IMR-90 (cell line): ENCODE measurements at regions of chr1 and their contacts with region 1.

Region 1: GRCh38 chr1:28369371-28370238 is at the start of gene PHACTR4:
- DNase-seq: peak; percentile 91
- ATAC-seq: peak; percentile 95
- H3K4me3 ChIP-seq: peak within 1 kb of the TSS; percentile 66
- H3K27ac ChIP-seq: peak within 1 kb of the TSS; percentile 93
- H3K4me1 ChIP-seq: 0 out of 2 replicates have a peak, but pooled peaks cover 5% of the 10 kb centered on the region
- H3K27me3 ChIP-seq: no peaks in the 10 kb centered on the region
- CTCF ChIP-seq: no peak
- POLR2A ChIP-seq: peak; percentile 76; the same call in 1 of the 2 replicates
- RAD21 ChIP-seq: no peak
- total RNA-seq, gene PHACTR4: 6.9 and 7.5 TPM in 2 replicates

Region 2: DNA sequence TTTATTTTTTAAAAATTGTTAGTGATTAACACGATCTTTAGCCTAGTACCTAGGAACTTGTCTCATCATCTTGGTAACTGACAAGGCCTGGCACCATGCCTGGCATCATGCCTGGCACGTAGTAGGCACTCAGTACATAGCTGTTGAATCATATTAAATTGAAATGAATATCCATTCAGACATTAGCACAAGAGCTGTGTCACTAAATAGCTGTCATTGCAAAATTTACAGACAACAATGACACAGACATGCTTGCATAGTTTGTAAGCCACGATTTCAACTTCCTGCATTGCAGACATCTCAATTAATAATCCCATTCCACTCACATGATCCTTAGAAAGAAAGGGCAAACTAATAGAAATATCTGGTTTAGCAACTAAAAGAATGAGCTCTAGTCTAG is 15.5 kb before region 1 on chr1:
- CTCF ChIA-PET with region 1: interaction called, 11 read pairs
- POLR2A ChIA-PET with region 1: no interaction called
- dilution Hi-C with region 1: no loop called
- in situ Hi-C with region 1: no loop called
- intact Hi-C with region 1: loop called (anchors 1 kb)
- DNase-seq: peak; percentile 69
- ATAC-seq: peak; percentile 73
- H3K4me3 ChIP-seq: no peak overlapping the region
- H3K27ac ChIP-seq: no peak overlapping the region
- H3K4me1 ChIP-seq: peaks cover 9% of the 10 kb centered on the region; the same call in 1 of the 2 replicates
- H3K27me3 ChIP-seq: no peaks in the 10 kb centered on the region
- CTCF ChIP-seq: no peak
- POLR2A ChIP-seq: no peak
- RAD21 ChIP-seq: no peak